ENCODE measurements at regions of chr12 and their contacts with region 1.

Region 1: GRCh38 chr12:110431957-110432587 is 18.1 kb downstream of the ARPC3 start:
- DNase-seq: peak; percentile 41
- H3K4me3 ChIP-seq: peak overlapping the region; percentile 36 to 55 (median 48)
- H3K27ac ChIP-seq: peak overlapping the region in 3 of 4 donors; percentile 60 to 71 (median 66)
- H3K4me1 ChIP-seq: peaks cover 0 to 4% (median 0%) of the 10 kb centered on the region in 4 donors
- H3K27me3 ChIP-seq: no peaks in the 10 kb centered on the region
- CTCF ChIP-seq: no peak
- EP300 ChIP-seq: no peak
- POLR2A ChIP-seq: no peak

Region 2: GRCh38 chr12:109995686-109996482 is 436.2 kb before region 1 on chr12 and contains the start of gene GIT2:
- intact Hi-C with region 1: loop called (anchors 5 kb)
- DNase-seq: peak; percentile 97
- H3K4me3 ChIP-seq: peak within 1 kb of the TSS; percentile 75 to 98 (median 89)
- H3K27ac ChIP-seq: peak within 1 kb of the TSS; percentile 79 to 87 (median 84)
- H3K4me1 ChIP-seq: peaks cover 0 to 48% (median 34%) of the 10 kb centered on the region in 4 donors
- H3K27me3 ChIP-seq: no peaks in the 10 kb centered on the region
- CTCF ChIP-seq: no peak
- EP300 ChIP-seq: no peak
- POLR2A ChIP-seq: peak; percentile 41 to 45
- total RNA-seq, gene GIT2: 26.7 to 54.6 (median 35.1) TPM